Uterus (tissue), 4 donors: ENCODE measurements at regions of chr3 and their contacts with region 1.

Region 1: DNA sequence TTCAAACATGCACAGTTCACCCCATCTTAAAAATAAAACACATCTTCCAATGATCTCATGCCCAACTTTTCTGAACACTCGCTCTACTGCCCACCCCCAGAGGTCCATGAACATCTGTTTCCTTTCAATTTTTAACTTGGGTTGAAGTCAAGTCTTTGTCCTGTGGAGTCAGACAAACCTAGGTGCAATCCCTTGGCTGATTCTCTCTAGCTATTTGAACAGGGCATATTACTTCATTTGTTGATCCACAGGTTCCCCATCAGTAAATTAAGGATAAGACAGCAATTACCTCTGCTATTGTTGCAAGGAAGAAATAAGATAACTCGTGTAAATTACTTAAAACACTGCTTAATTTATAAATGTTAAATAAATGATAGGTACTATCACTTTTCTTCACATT is 180.1 kb downstream of the CNTN3 start:
- DNase-seq: no peak
- H3K4me3 ChIP-seq: no peak overlapping the region
- H3K27ac ChIP-seq: no peak overlapping the region
- H3K4me1 ChIP-seq: no peaks in the 10 kb centered on the region
- H3K27me3 ChIP-seq: no peaks in the 10 kb centered on the region
- CTCF ChIP-seq: no peak
- POLR2A ChIP-seq: no peak

Region 2: GRCh38 chr3:73448761-73449301 is 985.6 kb before region 1 on chr3:
- intact Hi-C with region 1: loop called (anchors 5 kb)
- DNase-seq: no peak
- H3K4me3 ChIP-seq: no peak overlapping the region
- H3K27ac ChIP-seq: peak overlapping the region in 1 of 2 donors; percentile 16
- H3K4me1 ChIP-seq: peaks cover 0 to 20% of the 10 kb centered on the region in 2 donors
- H3K27me3 ChIP-seq: no peaks in the 10 kb centered on the region
- CTCF ChIP-seq: no peak
- POLR2A ChIP-seq: no peak

Region 3: DNA sequence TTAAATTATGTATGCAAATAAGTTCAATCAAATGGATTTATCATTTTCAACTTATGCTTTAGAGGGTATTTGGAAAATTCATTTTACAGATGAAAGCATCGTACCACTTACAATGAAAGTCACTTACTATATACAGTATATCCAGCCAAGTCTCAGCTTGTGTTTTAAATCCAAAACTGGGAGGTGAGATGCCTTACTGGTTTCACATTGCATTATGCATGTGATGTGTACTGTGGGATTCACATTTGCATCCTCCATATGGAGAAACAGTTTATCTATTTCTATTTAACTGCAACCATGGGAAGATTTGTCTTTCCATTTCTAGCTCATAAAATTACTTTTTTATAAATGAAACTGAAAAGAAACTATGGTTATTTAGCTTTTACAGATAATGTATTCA is 68.1 kb before region 1 on chr3:
- intact Hi-C with region 1: no loop called
- DNase-seq: no peak
- H3K4me3 ChIP-seq: no peak overlapping the region
- H3K27ac ChIP-seq: no peak overlapping the region
- H3K4me1 ChIP-seq: no peaks in the 10 kb centered on the region
- H3K27me3 ChIP-seq: no peaks in the 10 kb centered on the region
- CTCF ChIP-seq: no peak
- POLR2A ChIP-seq: no peak

Region 4: DNA sequence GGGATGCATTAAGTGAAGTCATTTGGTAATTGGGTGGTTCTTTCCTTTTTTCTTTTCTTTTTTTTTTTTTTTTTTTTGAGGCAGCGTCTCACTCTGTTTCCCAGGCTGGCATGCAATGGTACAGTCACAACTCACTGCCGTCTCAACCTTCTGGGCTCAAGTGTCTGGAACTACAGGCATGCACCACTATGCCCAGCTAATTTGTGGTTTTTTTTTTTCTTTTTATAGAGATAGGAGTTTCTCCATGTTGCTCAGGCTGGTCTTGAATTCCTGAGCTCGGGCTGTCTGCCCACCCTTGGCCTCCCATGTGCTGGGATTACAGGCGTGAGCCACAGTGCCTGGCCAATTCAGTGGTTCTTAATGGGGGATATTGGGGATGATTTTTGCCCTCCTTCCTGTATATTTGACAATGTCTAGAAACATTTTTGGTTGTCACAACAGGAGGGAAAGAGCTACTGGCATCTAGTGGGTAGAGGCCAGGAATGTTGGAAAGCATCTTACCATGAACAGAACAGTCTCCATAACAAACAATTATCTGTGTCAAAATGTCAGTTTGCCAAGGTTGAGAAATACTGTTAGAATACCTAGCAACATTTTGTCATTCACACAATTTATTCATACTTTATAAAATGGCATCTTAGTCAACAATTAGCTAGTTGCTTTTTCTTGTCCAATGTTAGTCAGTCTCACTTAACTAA is 259.4 kb after region 1 on chr3:
- intact Hi-C with region 1: no loop called
- DNase-seq: no peak
- H3K4me3 ChIP-seq: no peak overlapping the region
- H3K27ac ChIP-seq: no peak overlapping the region
- H3K4me1 ChIP-seq: no peaks in the 10 kb centered on the region
- H3K27me3 ChIP-seq: no peaks in the 10 kb centered on the region
- CTCF ChIP-seq: no peak
- POLR2A ChIP-seq: no peak